ENCODE measurements at regions of chr14 and their contacts with region 1.

Region 1: DNA sequence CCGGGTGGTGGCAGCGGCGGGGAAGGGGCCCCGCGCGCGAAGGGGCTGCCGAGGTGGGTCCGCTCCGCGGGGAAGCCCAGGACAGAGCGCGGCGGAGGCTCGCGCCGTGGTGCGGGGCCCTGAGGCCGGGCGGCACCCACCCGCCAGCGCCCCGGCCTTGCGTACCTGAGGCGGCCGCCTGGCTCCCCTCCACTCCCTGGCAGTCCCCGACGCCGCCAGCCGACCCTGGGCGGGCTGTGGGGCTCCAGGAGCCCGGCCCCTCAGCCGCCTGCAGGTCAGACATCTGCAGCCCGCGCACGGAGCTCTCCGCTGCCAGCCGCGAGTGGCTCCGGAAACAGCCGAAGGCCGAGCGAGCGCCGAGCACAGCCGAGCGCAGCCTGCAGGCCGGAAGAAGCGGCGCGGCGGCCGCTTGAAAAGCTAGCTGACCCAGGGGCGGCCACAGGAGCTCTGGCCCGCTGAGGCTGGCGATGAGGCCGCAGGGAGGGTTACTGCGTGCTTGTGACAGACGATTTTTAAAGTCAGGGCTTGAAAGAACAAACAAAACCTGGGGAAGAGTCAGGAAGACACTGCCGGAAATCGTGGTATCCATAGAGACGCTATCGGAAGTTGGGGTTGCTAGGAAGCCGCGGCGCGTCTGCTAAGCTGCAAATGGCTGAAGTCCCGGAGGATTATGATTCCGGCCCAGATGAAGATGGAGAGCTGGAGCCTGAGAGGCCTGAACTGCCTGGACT is at the starts of genes SAMD15 and TMED8:
- DNase-seq: peak; percentile 95
- CTCF ChIP-seq: peak; percentile 23

Region 2: GRCh38 chr14:77388959-77389358 is 12.0 kb after region 1 on chr14:
- CTCF ChIA-PET with region 1: interaction called, 12 read pairs
- POLR2A ChIA-PET with region 1: no interaction called
- DNase-seq: no peak
- CTCF ChIP-seq: no peak

Measured in GM10248 (cell line).